Heart right ventricle (tissue), 16 donors: ENCODE measurements at regions of chr1 and their contacts with region 1.

Region 1: GRCh38 chr1:24861821-24862727 is 68.0 kb downstream of the RUNX3 start:
- DNase-seq: no peak
- ATAC-seq: no peak
- H3K4me3 ChIP-seq: no peak overlapping the region
- H3K27ac ChIP-seq: no peak overlapping the region
- H3K4me1 ChIP-seq: no peaks in the 10 kb centered on the region
- H3K27me3 ChIP-seq: peaks cover 0 to 64% (median 58%) of the 10 kb centered on the region in 7 donors
- CTCF ChIP-seq: no peak

Region 2: DNA sequence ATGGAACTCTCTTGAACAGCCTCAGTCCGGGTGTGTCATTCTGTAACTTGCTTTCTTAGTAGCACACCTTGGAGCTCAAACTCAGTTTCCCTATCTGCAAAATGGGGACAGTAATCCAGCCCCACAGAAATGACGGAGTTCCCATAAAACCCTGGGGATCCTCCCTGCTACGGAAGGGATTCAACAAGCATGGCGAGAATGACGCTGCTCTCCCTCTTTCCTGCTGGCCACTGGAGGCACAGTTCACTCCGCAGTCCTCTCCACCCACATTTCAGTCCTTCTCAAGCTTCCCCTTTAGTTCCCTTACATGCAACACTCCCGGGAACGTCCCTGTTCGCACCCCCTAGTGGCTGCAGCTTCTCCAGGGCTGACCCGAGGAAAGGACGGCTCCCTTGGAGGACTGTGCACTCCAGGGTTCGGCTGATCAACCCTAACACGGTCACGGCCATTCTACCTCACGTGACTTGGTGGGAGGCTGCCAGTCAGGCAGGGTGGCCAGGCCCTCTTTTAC is 47.4 kb after region 1 on chr1:
- intact Hi-C with region 1: loop called in 4 of 10 experiments (anchors 5 to 10 kb)
- DNase-seq: peak; percentile 55
- ATAC-seq: peak; percentile 36 to 68 (median 60)
- H3K4me3 ChIP-seq: no peak overlapping the region
- H3K27ac ChIP-seq: no peak overlapping the region
- H3K4me1 ChIP-seq: peaks cover 0 to 13% (median 0%) of the 10 kb centered on the region in 9 donors
- H3K27me3 ChIP-seq: peaks cover 0 to 15% (median 5%) of the 10 kb centered on the region in 7 donors
- CTCF ChIP-seq: peak in 7 of 9 donors; percentile 28 to 57 (median 43)

Region 3: GRCh38 chr1:25204797-25205480 is 342.9 kb after region 1 on chr1:
- intact Hi-C with region 1: loop called in 2 of 10 experiments (anchors 5 to 10 kb)
- DNase-seq: no peak
- ATAC-seq: peak in 1 of 8 donors; percentile 45
- H3K4me3 ChIP-seq: no peak overlapping the region
- H3K27ac ChIP-seq: no peak overlapping the region
- H3K4me1 ChIP-seq: peaks cover 0 to 2% (median 0%) of the 10 kb centered on the region in 9 donors
- H3K27me3 ChIP-seq: peaks cover 0 to 17% (median 2%) of the 10 kb centered on the region in 7 donors
- CTCF ChIP-seq: peak; percentile 60 to 84 (median 80)